ENCODE measurements at regions of chr3 and their contacts with region 1.

Region 1: DNA sequence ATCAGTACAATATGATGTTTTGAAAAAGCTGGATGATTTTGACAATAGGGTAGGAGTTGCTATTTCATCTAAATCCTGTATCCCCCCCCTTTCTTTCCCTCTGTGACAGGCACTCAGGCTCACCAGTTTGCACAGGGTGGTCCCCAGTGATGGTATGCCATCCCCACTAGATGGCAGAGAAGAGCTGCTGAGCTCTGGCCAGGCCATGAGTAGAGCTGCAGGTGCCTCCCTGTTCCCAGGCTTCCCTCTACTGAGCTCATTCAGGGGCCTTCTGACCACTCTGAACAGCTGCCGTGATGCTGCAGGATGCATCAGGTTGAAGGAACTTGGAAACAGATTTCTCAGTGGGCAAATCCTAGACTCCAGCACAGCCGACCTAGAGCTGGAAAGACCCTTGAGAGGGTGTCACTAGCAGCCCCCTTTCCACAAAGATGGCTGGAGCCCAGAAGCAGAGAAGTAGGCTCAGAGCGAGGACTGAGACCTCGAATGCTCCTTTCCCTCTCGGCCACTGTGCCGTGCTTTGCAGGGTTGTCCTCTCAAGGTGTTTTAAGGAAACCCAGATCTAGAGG is 45.1 kb downstream of the EFCAB12 start:
- DNase-seq: peak; percentile 73 to 79
- H3K4me3 ChIP-seq: no peak overlapping the region
- H3K4me3 Mint-ChIP-seq: no peak overlapping the region
- H3K27ac Mint-ChIP-seq: no peak overlapping the region
- H3K4me1 ChIP-seq: no peaks in the 10 kb centered on the region
- H3K4me1 Mint-ChIP-seq: peaks cover 5% of the 10 kb centered on the region
- H3K27me3 ChIP-seq: no peaks in the 10 kb centered on the region
- H3K27me3 Mint-ChIP-seq: no peaks in the 10 kb centered on the region
- CTCF ChIP-seq: peak; percentile 82 to 88

Region 2: GRCh38 chr3:128956440-128956839 is 426.9 kb before region 1 on chr3:
- CTCF ChIA-PET with region 1: no interaction called
- POLR2A ChIA-PET with region 1: no interaction called
- intact Hi-C with region 1: no loop called
- DNase-seq: no peak
- H3K4me3 ChIP-seq: no peak overlapping the region
- H3K4me3 Mint-ChIP-seq: no peak overlapping the region
- H3K27ac Mint-ChIP-seq: no peak overlapping the region
- H3K4me1 ChIP-seq: no peaks in the 10 kb centered on the region
- H3K4me1 Mint-ChIP-seq: no peaks in the 10 kb centered on the region
- H3K27me3 ChIP-seq: no peaks in the 10 kb centered on the region
- H3K27me3 Mint-ChIP-seq: peaks cover 4% of the 10 kb centered on the region
- CTCF ChIP-seq: no peak

Region 3: GRCh38 chr3:129026728-129027543 is 356.4 kb before region 1 on chr3:
- CTCF ChIA-PET with region 1: no interaction called
- POLR2A ChIA-PET with region 1: no interaction called
- intact Hi-C with region 1: no loop called
- DNase-seq: peak; percentile 93 to 95
- H3K4me3 ChIP-seq: peak overlapping the region; percentile 44
- H3K4me3 Mint-ChIP-seq: peak overlapping the region; percentile 77
- H3K27ac Mint-ChIP-seq: peak overlapping the region; percentile 73
- H3K4me1 ChIP-seq: peaks cover 6% of the 10 kb centered on the region; the same call in 1 of the 2 replicates
- H3K4me1 Mint-ChIP-seq: peaks cover 7% of the 10 kb centered on the region
- H3K27me3 ChIP-seq: no peaks in the 10 kb centered on the region
- H3K27me3 Mint-ChIP-seq: peaks cover 3% of the 10 kb centered on the region
- CTCF ChIP-seq: peak; percentile 48 to 67

Region 4: DNA sequence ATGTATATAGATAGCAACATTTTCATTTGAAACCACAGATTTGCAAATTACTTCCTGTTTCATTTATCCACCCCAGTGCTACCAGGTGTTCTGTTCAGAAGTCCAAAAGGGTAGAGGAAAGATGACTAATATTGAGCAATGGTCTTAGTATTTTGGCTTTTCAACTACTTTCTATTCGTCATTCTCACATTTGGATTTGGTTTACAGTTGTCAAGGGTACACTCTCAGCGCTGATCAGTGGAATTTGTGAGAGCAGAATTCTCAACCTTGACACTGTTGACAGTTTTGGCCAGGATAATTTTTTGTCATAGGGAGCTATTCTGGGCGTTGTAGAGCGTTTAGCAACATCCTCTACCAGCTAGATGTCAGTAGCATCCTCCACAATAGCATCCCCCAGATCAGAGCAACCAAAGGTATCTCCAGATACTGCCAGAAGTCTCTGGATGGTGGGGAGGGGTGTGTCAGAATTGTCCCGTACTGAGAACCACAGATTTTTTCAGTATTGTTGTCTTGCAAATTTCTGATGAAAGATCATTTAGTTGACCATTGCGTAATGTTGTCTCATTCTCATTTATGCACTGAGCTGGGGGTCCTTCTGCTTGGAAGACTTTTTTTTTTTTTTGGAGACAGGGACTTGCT is 100.5 kb before region 1 on chr3:
- CTCF ChIA-PET with region 1: no interaction called
- POLR2A ChIA-PET with region 1: no interaction called
- intact Hi-C with region 1: no loop called
- DNase-seq: no peak
- H3K4me3 ChIP-seq: no peak overlapping the region
- H3K4me3 Mint-ChIP-seq: no peak overlapping the region
- H3K27ac Mint-ChIP-seq: no peak overlapping the region
- H3K4me1 ChIP-seq: peaks cover 5% of the 10 kb centered on the region
- H3K4me1 Mint-ChIP-seq: peaks cover 6% of the 10 kb centered on the region
- H3K27me3 ChIP-seq: no peaks in the 10 kb centered on the region
- H3K27me3 Mint-ChIP-seq: no peaks in the 10 kb centered on the region
- CTCF ChIP-seq: no peak

Region 5: GRCh38 chr3:129399145-129399894 is 15.9 kb after region 1 on chr3:
- CTCF ChIA-PET with region 1: interaction called, 4 read pairs
- POLR2A ChIA-PET with region 1: interaction called, 5 read pairs
- intact Hi-C with region 1: loop called (anchors 2 kb)
- DNase-seq: peak; percentile 88 to 90
- H3K4me3 ChIP-seq: peak overlapping the region; percentile 96
- H3K4me3 Mint-ChIP-seq: peak overlapping the region; percentile 86
- H3K27ac Mint-ChIP-seq: peak overlapping the region; percentile 97
- H3K4me1 ChIP-seq: 0 out of 2 replicates have a peak, but pooled peaks cover 4% of the 10 kb centered on the region
- H3K4me1 Mint-ChIP-seq: peaks cover 5% of the 10 kb centered on the region
- H3K27me3 ChIP-seq: no peaks in the 10 kb centered on the region
- H3K27me3 Mint-ChIP-seq: no peaks in the 10 kb centered on the region
- CTCF ChIP-seq: peak; percentile 57 to 81

Region 6: GRCh38 chr3:129439817-129440617 is 56.6 kb after region 1 on chr3 and contains the starts of genes IFT122 and MBD4:
- CTCF ChIA-PET with region 1: interaction called, 7 read pairs
- POLR2A ChIA-PET with region 1: no interaction called
- intact Hi-C with region 1: loop called (anchors 5 kb)
- DNase-seq: peak; percentile 98 to 99
- H3K4me3 ChIP-seq: peak within 1 kb of the TSS; percentile 89
- H3K4me3 Mint-ChIP-seq: peak within 1 kb of the TSS; percentile 90
- H3K27ac Mint-ChIP-seq: peak within 1 kb of the TSS; percentile 96
- H3K4me1 ChIP-seq: peaks cover 20% of the 10 kb centered on the region
- H3K4me1 Mint-ChIP-seq: peaks cover 33% of the 10 kb centered on the region
- H3K27me3 ChIP-seq: no peaks in the 10 kb centered on the region
- H3K27me3 Mint-ChIP-seq: no peaks in the 10 kb centered on the region
- CTCF ChIP-seq: no peak
- total RNA-seq, gene IFT122: 21.9 and 30.0 TPM in 2 replicates
- total RNA-seq, gene MBD4: 33.5 and 39.8 TPM in 2 replicates

Region 7: GRCh38 chr3:129627429-129628168 is 244.2 kb after region 1 on chr3:
- CTCF ChIA-PET with region 1: interaction called, 18 read pairs
- POLR2A ChIA-PET with region 1: no interaction called
- intact Hi-C with region 1: loop called (anchors 5 kb)
- DNase-seq: peak; percentile 83 to 86
- H3K4me3 ChIP-seq: peak overlapping the region; percentile 85
- H3K4me3 Mint-ChIP-seq: peak overlapping the region; percentile 97
- H3K27ac Mint-ChIP-seq: peak overlapping the region; percentile 98
- H3K4me1 ChIP-seq: peaks cover 15% of the 10 kb centered on the region
- H3K4me1 Mint-ChIP-seq: peaks cover 11% of the 10 kb centered on the region
- H3K27me3 ChIP-seq: no peaks in the 10 kb centered on the region
- H3K27me3 Mint-ChIP-seq: no peaks in the 10 kb centered on the region
- CTCF ChIP-seq: peak; percentile 74 to 95

Region 8: GRCh38 chr3:130014526-130014925 is 631.1 kb after region 1 on chr3:
- CTCF ChIA-PET with region 1: no interaction called
- POLR2A ChIA-PET with region 1: interaction called, 11 read pairs
- intact Hi-C with region 1: no loop called
- DNase-seq: no peak
- H3K4me3 ChIP-seq: no peak overlapping the region
- H3K4me3 Mint-ChIP-seq: no peak overlapping the region
- H3K27ac Mint-ChIP-seq: no peak overlapping the region
- H3K4me1 ChIP-seq: no peaks in the 10 kb centered on the region
- H3K4me1 Mint-ChIP-seq: no peaks in the 10 kb centered on the region
- H3K27me3 ChIP-seq: no peaks in the 10 kb centered on the region
- H3K27me3 Mint-ChIP-seq: no peaks in the 10 kb centered on the region
- CTCF ChIP-seq: no peak